HCT116 (cell line): ENCODE measurements at regions of chr9 and their contacts with region 1.

Region 1: GRCh38 chr9:4137234-4137633 is 162.6 kb downstream of the GLIS3 start:
- DNase-seq: peak; percentile 85
- ATAC-seq: peak; percentile 85
- H3K4me3 ChIP-seq: peak overlapping the region in 1 of 2 experiments; percentile 35; a peak in 2 of 4 replicates
- H3K27ac ChIP-seq: peak overlapping the region; percentile 48; the same call in 1 of the 2 replicates
- H3K4me1 ChIP-seq: peaks cover 17 to 41% of the 10 kb centered on the region in 2 experiments
- H3K27me3 ChIP-seq: no peaks in the 10 kb centered on the region
- CTCF ChIP-seq: no peak
- POLR2A ChIP-seq: no peak
- RAD21 ChIP-seq: 0 out of 2 replicates have a peak, but pooled peaks have one; percentile 13

Region 2: DNA sequence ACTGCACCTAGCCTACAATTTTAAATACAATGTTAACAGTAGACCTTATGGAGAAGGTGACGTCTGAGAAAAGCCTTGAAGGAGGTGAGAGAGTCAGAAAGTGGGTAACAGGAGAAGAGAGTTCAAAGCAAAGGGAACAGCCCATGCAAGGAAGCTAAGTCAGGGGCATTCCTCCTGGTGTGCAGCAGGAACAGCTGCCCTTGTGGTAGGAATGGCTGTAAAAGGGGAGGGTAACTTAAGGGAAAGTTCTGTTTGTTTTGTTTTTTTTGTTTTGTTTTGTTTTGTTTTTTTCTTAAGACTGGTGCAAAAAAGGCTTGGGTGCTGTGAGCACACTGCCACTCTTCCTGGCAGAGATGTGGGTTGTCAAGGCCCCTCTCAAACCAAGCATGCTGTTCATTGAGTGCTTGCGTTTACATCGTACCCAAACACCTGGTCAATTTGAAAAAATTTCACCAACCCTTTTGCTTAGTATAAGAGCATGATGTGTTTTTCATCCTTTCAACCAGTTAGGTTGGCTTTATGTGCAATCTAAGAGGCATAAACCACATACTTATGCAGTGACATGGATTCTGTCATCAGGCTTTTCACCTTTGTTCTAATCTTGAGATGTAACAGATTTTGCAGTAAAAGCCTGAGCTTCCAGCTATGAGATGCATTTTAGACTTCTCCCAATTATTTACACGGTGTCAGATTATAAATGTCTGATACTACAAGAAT is 117.0 kb before region 1 on chr9:
- CTCF ChIA-PET with region 1: no interaction called
- POLR2A ChIA-PET with region 1: no interaction called
- RAD21 ChIA-PET with region 1: no interaction called
- intact Hi-C with region 1: no loop called
- DNase-seq: no peak
- ATAC-seq: no peak
- H3K4me3 ChIP-seq: no peak overlapping the region
- H3K27ac ChIP-seq: no peak overlapping the region
- H3K4me1 ChIP-seq: no peaks in the 10 kb centered on the region; a peak in 1 of 4 replicates
- H3K27me3 ChIP-seq: no peaks in the 10 kb centered on the region
- CTCF ChIP-seq: no peak
- POLR2A ChIP-seq: no peak
- RAD21 ChIP-seq: no peak

Region 3: GRCh38 chr9:4297151-4297785 is 160.0 kb after region 1 on chr9:
- CTCF ChIA-PET with region 1: no interaction called
- POLR2A ChIA-PET with region 1: no interaction called
- RAD21 ChIA-PET with region 1: no interaction called
- intact Hi-C with region 1: loop called (anchors 5 kb)
- DNase-seq: peak; percentile 79
- ATAC-seq: peak; percentile 67
- H3K4me3 ChIP-seq: peak overlapping the region; percentile 71 to 73
- H3K27ac ChIP-seq: peak overlapping the region; percentile 75
- H3K4me1 ChIP-seq: peaks cover 18 to 80% of the 10 kb centered on the region in 2 experiments
- H3K27me3 ChIP-seq: no peaks in the 10 kb centered on the region
- CTCF ChIP-seq: peak; percentile 24 to 57 (median 55); a peak in 5 of 6 replicates
- POLR2A ChIP-seq: no peak
- RAD21 ChIP-seq: peak; percentile 56